ENCODE measurements at regions of chr22 and their contacts with region 1.

Region 1: DNA sequence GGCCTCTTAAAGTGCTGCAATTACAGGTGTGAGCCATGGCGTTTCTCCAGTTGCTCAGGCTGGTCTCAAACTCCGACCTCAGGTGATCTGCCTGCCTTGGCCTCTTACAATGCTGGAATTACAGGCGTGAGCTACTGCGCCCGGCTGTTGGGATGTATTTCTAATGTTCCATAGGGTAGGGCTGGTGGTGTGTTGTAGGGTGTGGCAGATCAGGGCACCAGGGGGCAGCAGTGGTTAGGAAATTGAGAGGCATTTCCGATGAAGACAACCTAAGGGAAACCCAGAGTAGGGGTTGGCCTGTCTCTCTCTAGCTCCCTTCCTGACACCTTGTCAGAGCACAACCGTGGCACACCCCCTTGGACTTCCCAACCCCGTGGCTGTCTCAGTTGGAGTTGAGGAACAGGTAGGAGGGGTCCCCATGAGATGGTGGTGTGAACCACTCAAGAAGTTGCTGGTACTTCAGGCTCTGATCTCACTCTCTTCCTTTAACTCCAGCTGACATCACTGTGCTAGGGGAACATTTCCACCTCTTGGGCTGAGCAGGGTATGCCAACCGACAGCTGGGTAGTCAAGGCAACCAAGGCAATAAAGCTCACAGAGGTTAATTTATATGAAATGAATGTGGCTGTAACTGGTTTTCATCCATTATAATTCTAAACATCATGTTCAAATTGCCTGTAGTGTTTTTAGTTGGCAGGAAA is 33.0 kb downstream of the YWHAH start:
- DNase-seq: peak; percentile 48
- ATAC-seq: peak; percentile 95
- H3K4me3 ChIP-seq: no peak overlapping the region
- H3K27ac ChIP-seq: no peak overlapping the region
- H3K4me1 ChIP-seq: no peaks in the 10 kb centered on the region
- H3K27me3 ChIP-seq: no peaks in the 10 kb centered on the region
- CTCF ChIP-seq: peak; percentile 77

Region 2: DNA sequence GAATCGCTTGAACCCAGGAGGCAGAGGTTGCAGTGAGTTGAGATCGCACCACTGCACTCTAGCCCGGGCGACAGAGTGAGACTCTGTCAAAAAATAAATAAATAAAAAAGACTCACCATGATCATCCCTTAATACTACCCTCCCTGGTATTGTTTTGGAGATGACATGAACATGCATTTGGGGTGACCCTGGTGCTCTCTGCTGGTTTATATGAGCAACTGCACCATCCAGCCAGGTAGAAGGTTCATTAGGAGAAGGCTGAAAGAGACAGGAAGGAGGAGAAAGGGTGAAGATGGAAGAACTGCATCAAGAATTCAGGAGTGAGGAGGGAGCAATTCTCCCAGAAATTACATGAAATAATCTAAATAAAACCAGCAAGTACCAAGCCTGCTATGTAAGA is 103.6 kb after region 1 on chr22:
- CTCF ChIA-PET with region 1: interaction called, 8 read pairs
- POLR2A ChIA-PET with region 1: interaction called, 5 read pairs
- in situ Hi-C with region 1: no loop called
- intact Hi-C with region 1: loop called (anchors 2 kb)
- DNase-seq: peak; percentile 25
- ATAC-seq: peak; percentile 88; the same call in 1 of the 2 replicates
- H3K4me3 ChIP-seq: no peak overlapping the region
- H3K27ac ChIP-seq: no peak overlapping the region
- H3K4me1 ChIP-seq: no peaks in the 10 kb centered on the region
- H3K27me3 ChIP-seq: no peaks in the 10 kb centered on the region
- CTCF ChIP-seq: peak; percentile 74

Measured in Panc1 (cell line).